ENCODE measurements at regions of chr9 and their contacts with region 1.

Region 1: GRCh38 chr9:136790927-136791641 is at the start of gene TMEM141:
- DNase-seq: peak; percentile 99 to 100 (median 100)
- H3K4me3 ChIP-seq: peak within 1 kb of the TSS; percentile 79
- H3K4me3 Mint-ChIP-seq: peak within 1 kb of the TSS; percentile 77 to 93 (median 85)
- H3K27ac ChIP-seq: peak within 1 kb of the TSS; percentile 93
- H3K27ac Mint-ChIP-seq: peak within 1 kb of the TSS; percentile 89 to 96 (median 94)
- H3K4me1 ChIP-seq: peaks cover 18% of the 10 kb centered on the region
- H3K4me1 Mint-ChIP-seq: peaks cover 18 to 29% (median 25%) of the 10 kb centered on the region in 3 donors
- H3K27me3 ChIP-seq: no peaks in the 10 kb centered on the region
- H3K27me3 Mint-ChIP-seq: peaks cover 3% of the 10 kb centered on the region in 2 donors
- total RNA-seq, gene TMEM141: 50.1 to 50.6 TPM

Region 2: GRCh38 chr9:136779808-136780207 is 11.3 kb before region 1 on chr9:
- CTCF ChIA-PET with region 1: interaction called, 19 read pairs
- POLR2A ChIA-PET with region 1: no interaction called
- DNase-seq: no peak
- H3K4me3 ChIP-seq: no peak overlapping the region
- H3K4me3 Mint-ChIP-seq: no peak overlapping the region
- H3K27ac ChIP-seq: no peak overlapping the region
- H3K27ac Mint-ChIP-seq: no peak overlapping the region
- H3K4me1 ChIP-seq: no peaks in the 10 kb centered on the region
- H3K4me1 Mint-ChIP-seq: peaks cover 0 to 3% (median 0%) of the 10 kb centered on the region in 3 donors
- H3K27me3 ChIP-seq: no peaks in the 10 kb centered on the region
- H3K27me3 Mint-ChIP-seq: peaks cover 16 to 22% of the 10 kb centered on the region in 2 donors

Region 3: GRCh38 chr9:136807281-136808074 is 16.4 kb after region 1 on chr9 and contains the start of gene RABL6:
- CTCF ChIA-PET with region 1: interaction called, 14 read pairs
- POLR2A ChIA-PET with region 1: interaction called, 5 read pairs
- DNase-seq: peak; percentile 74 to 89 (median 86)
- H3K4me3 ChIP-seq: peak within 1 kb of the TSS; percentile 69
- H3K4me3 Mint-ChIP-seq: peak within 1 kb of the TSS; percentile 88 to 95 (median 91)
- H3K27ac ChIP-seq: peak within 1 kb of the TSS; percentile 78
- H3K27ac Mint-ChIP-seq: peak within 1 kb of the TSS; percentile 92 to 97 (median 94)
- H3K4me1 ChIP-seq: peaks cover 29% of the 10 kb centered on the region
- H3K4me1 Mint-ChIP-seq: peaks cover 24 to 47% (median 28%) of the 10 kb centered on the region in 3 donors
- H3K27me3 ChIP-seq: no peaks in the 10 kb centered on the region
- H3K27me3 Mint-ChIP-seq: peaks cover 0 to 1% of the 10 kb centered on the region in 2 donors
- total RNA-seq, gene RABL6: 98.2 to 106 TPM

Region 4: DNA sequence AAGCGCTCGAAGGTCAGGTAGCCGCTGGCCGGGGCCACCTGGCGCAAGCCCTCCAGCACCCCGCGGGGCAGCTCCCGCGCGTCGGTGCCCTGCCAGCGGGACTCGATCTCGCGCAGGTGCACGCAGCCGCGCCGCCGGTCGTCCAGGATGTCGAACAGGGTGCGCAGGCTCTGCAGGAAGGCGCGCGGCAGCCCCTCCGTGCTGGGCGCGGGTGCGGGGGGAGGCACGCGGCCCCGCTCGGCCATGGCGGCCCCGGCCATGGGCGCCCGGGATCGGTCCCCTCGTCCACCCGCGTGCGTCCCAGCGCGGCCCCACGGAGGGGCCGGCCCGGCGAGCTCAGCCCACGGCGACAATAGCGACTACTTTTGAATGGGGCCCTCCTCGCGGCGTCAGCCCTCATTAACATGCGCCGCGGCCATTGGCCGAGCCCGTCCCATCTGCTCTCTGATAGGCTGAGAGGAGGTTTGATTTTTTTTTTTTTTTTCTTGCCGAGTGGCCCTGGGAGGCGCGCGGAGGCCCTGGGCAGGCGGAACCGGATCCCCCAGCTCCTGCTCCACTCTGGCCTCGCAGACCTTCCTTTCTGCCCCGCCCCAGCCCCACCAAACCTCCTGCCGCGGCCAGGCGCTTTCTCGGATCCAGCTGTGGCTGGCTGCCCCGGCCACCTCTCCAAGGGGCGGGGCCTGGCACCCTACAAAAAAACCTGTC is 279.3 kb after region 1 on chr9 and contains the start of gene SAPCD2:
- CTCF ChIA-PET with region 1: interaction called, 11 read pairs
- POLR2A ChIA-PET with region 1: interaction called, 3 read pairs
- DNase-seq: peak; percentile 80 to 91 (median 85)
- H3K4me3 ChIP-seq: peak within 1 kb of the TSS; percentile 39
- H3K4me3 Mint-ChIP-seq: peak within 1 kb of the TSS; percentile 66 to 88 (median 77)
- H3K27ac ChIP-seq: peak within 1 kb of the TSS; percentile 65
- H3K27ac Mint-ChIP-seq: peak within 1 kb of the TSS in 6 of 8 donors; percentile 43 to 89 (median 75)
- H3K4me1 ChIP-seq: peaks cover 14% of the 10 kb centered on the region
- H3K4me1 Mint-ChIP-seq: peaks cover 6 to 19% (median 12%) of the 10 kb centered on the region in 3 donors
- H3K27me3 ChIP-seq: no peaks in the 10 kb centered on the region
- H3K27me3 Mint-ChIP-seq: peaks cover 3 to 4% of the 10 kb centered on the region in 2 donors
- total RNA-seq, gene SAPCD2: 11.5 to 12.7 TPM